ENCODE measurements at regions of chr10 and their contacts with region 1.

Region 1: DNA sequence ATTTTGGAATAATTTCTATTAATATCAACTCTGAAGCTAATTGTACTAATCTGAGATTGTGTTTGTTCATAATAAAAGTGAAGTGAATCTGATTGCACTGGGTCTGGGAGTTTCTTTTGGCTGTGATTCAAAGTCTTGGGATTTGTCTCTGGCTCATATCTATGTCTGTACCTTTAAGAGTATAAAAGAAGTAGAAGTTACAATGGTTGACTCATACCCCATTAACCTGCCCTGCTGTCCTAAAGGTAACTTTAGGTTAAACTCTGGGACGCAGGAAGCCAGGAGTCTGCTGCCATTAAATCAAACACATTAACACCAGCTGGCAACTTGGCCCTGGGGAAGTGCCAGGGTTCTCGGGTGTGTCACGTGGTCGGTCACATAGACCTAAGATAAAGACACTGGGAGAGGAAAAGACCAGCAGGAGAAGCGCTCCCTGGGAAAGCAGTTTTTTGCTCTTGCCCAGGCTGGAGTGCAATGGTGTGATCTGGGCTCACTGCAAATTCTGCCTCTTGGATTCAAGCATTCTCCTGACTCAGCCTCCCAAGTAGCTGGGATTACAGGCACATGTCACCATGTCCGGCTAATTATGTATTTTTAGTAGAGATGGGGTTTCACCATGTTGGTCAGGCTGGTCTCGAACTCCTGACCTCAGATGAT is 17.8 kb downstream of the SCD start:
- DNase-seq: peak; percentile 83 to 94
- H3K4me3 ChIP-seq: no peak overlapping the region
- H3K27ac ChIP-seq: peak overlapping the region; percentile 70
- H3K4me1 ChIP-seq: peaks cover 53% of the 10 kb centered on the region
- H3K27me3 ChIP-seq: no peaks in the 10 kb centered on the region
- CTCF ChIP-seq: no peak

Region 2: DNA sequence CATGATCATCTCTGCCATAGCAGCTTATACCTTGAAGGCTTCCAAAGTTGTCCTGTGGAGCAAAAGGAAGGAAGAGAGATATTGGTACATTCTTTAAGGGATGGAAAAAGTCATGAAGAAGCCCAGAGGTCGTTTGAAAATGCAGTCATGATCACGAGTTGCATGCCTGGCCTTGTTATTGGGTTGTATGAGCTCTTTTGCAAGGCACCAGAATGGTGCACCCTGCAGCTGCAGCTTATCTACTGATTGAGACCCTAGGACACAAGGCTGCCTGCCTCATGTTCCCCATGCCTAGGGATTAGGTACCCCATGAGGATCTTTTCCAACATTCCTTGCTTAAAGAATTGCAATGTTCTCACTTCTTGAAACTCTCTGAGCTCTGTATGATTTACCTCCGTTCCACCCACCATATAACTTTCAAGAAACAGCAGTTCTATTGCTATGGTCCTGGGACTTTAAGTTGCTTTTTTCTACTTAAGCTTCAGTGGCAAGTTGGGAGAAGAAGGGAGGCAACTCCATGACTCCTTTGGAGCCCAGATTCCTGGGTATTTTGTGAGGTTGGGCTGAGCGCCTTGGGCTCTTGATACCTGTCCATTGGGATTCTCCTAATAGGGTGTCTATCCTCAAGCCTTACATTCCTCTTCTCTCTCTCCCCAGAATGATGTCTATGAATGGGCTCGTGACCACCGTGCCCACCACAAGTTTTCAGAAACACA is 10.9 kb before region 1 on chr10:
- CTCF ChIA-PET with region 1: no interaction called
- POLR2A ChIA-PET with region 1: interaction called, 10 read pairs
- intact Hi-C with region 1: no loop called
- DNase-seq: no peak
- H3K4me3 ChIP-seq: no peak overlapping the region
- H3K27ac ChIP-seq: no peak overlapping the region
- H3K4me1 ChIP-seq: peaks cover 31% of the 10 kb centered on the region
- H3K27me3 ChIP-seq: no peaks in the 10 kb centered on the region
- CTCF ChIP-seq: no peak